ENCODE measurements at regions of chr17 and their contacts with region 1.

Region 1: GRCh38 chr17:65278050-65278819 is 141.1 kb downstream of the RGS9 start:
- DNase-seq: peak; percentile 33 to 67 (median 59)
- ATAC-seq: peak; percentile 89 to 94
- H3K4me3 ChIP-seq: no peak overlapping the region
- H3K27ac ChIP-seq: no peak overlapping the region
- H3K4me1 ChIP-seq: no peaks in the 10 kb centered on the region
- H3K27me3 ChIP-seq: no peaks in the 10 kb centered on the region

Region 2: DNA sequence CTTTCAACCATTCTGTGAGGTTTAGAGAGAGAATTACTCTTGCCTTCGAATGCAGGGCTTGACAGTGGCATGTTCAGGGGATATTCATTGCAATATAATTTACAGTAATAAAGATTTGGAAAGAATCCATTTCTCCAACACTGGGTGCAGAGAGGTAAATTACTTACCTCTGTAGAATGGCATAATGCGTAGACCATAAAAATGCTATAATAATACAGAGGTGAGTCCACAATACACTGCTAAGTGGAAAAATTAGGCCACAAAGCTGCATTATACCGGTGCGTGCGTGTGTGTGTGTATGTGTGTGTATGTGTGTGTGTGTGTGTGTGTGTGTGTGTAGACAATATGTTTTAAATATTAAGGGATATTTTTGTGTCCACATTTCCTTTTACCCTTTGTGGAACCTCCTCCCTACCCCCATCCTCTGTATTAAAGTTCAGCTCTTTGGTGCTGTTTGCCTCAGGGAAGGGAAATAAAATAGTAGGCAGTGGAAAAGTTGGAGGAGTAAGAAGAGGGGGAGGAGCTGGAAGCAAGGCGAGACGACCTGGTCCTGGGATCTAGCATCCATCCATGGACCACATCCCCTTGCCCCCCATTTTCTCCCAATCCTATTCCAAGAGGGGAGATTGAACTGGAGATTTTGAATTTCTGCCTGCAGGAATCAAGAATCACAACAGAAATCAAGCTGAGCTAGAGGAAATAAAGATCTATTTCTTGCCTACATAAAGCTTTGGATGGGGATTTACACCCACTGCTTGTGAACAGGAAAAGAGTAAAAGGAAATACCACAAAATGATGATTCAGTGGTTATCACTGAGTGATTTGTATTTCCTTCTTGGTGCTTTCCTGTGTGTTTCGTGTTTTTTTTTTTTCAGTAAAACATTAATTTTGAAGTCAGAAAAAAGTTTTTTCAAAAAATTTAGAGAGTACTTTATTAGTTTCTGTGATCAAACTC is 16.3 kb before region 1 on chr17:
- intact Hi-C with region 1: no loop called
- DNase-seq: no peak
- ATAC-seq: no peak
- H3K4me3 ChIP-seq: no peak overlapping the region
- H3K27ac ChIP-seq: no peak overlapping the region
- H3K4me1 ChIP-seq: no peaks in the 10 kb centered on the region
- H3K27me3 ChIP-seq: no peaks in the 10 kb centered on the region

Region 3: DNA sequence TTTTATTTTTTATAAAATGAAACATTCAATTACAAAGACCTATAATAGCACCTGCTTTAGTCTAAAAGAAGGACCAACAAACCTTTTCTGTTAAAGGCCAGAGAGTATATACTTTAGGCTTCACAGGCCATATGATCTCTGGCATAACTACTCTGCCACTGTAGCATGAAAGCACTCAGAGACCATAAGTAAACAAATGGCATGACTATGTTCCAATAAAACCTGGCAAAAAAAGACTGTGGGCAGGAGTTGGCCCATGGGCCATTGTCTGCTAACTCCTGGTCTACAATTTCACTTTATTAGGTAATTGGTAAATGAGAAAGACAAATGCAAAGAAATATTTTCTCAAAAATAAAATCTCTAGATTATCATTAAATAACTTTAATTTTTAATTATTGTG is 898.8 kb after region 1 on chr17:
- intact Hi-C with region 1: loop called in 1 of 4 experiments (anchors 10 kb)
- DNase-seq: no peak
- ATAC-seq: no peak
- H3K4me3 ChIP-seq: no peak overlapping the region
- H3K27ac ChIP-seq: no peak overlapping the region
- H3K4me1 ChIP-seq: no peaks in the 10 kb centered on the region
- H3K27me3 ChIP-seq: no peaks in the 10 kb centered on the region